ENCODE measurements at regions of chr18 and their contacts with region 1.

Region 1: GRCh38 chr18:76398896-76399612 is 96.0 kb downstream of the ZNF516 start:
- DNase-seq: peak; percentile 67 to 75
- ATAC-seq: peak; percentile 77 to 94
- H3K4me3 ChIP-seq: no peak overlapping the region
- H3K27ac ChIP-seq: no peak overlapping the region
- H3K4me1 ChIP-seq: peaks cover 6 to 13% of the 10 kb centered on the region in 2 donors
- H3K27me3 ChIP-seq: no peaks in the 10 kb centered on the region
- CTCF ChIP-seq: peak; percentile 90 to 99 (median 91)
- POLR2A ChIP-seq: no peak

Region 2: DNA sequence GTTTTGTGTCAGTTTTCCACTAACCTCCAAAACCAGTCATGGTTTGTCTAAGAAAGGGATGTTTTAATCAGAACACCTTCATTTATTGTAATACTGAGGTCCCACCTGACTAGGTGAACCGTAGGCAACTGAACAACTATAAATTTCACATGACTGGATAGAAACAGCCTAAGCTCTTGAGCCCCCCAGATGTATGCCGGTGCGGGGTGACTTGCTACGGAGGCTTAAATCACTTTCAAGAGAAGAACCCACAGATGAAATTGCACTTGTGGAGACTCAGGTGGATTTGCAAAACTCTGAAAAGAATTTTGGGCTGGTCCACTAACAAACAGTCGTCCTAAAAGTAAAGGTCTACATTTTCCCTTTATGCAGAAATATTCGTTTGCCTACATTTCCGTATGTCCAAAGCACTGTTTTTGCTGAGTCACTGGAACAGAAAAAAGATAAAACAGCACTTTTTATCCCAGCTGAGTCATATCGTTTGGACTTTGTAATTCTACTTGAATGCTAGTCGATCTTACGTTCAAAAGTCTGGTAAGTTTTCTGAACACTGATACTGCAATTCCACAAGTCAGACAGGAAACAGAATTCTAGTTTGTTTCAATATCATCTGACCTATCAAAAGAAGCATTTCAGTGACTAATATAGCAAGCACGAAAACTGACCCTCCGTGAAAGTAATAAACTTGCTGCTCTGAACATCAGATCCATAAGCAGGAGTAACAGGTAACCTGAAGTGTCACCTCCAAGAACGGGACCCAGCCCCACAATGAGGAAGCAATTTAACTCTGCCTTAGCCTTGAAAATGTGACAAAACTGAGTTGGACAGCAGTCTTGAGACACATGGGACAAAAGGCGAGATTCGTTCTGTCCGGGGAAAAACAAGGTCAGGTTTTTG is 77.9 kb after region 1 on chr18:
- in situ Hi-C with region 1: no loop called
- intact Hi-C with region 1: loop called (anchors 5 kb)
- DNase-seq: no peak
- ATAC-seq: peak; percentile 21 to 51
- H3K4me3 ChIP-seq: peak overlapping the region; percentile 14 to 36 (median 34)
- H3K27ac ChIP-seq: peak overlapping the region; percentile 67 to 79 (median 72)
- H3K4me1 ChIP-seq: peaks cover 38 to 45% of the 10 kb centered on the region in 2 donors
- H3K27me3 ChIP-seq: no peaks in the 10 kb centered on the region
- CTCF ChIP-seq: no peak
- POLR2A ChIP-seq: no peak

Region 3: DNA sequence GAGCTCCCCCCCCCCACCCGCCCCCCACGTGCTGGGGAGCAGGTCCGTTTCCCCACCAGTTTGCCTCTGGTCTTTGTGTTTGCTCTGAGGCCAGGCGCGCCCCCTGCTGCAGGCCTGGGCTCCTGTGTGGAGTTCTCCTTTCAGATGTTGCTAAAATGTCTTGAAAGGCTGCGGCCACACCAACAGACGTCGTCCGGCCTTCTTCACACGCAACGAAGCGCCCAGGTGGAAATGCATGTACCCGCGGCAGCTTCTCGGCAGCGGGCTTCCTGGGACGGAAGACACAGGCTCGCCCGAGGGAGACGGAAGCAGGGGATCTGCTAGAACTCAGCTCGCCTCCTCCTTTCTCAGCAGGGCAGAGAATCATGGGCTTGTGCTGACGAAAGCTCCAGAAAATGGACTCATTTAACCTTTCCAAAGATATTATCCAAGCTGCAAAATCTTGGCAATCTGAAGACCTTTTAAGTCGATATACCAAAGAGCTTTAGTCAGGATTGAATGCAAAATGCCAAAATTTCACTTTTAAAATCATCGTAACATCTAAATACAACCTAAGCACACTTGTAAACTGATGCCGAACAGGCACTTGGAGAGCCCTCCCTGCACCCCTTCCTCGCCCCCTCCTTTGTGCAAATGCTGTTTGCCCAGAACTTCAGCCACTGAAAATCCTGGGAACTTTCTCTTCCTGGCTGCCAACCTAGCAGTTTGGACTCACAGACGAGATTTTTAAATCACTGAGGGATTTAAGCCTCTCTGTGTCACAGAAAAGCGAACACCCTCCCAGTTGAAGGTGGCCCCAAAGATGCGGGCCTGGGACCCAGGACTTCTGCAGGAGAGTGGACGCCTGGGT is 221.5 kb after region 1 on chr18:
- in situ Hi-C with region 1: loop called in 1 of 4 experiments (anchors 5 kb)
- intact Hi-C with region 1: loop called (anchors 2 kb)
- DNase-seq: peak; percentile 15 to 59
- ATAC-seq: peak; percentile 44 to 80
- H3K4me3 ChIP-seq: peak overlapping the region; percentile 36 to 55 (median 44)
- H3K27ac ChIP-seq: peak overlapping the region in 2 of 4 donors; percentile 47 to 52
- H3K4me1 ChIP-seq: peaks cover 8 to 10% of the 10 kb centered on the region in 2 donors
- H3K27me3 ChIP-seq: no peaks in the 10 kb centered on the region
- CTCF ChIP-seq: peak; percentile 3 to 69 (median 27)
- POLR2A ChIP-seq: no peak

Region 4: GRCh38 chr18:76686737-76687262 is 287.7 kb after region 1 on chr18:
- in situ Hi-C with region 1: loop called in 1 of 4 experiments (anchors 10 kb)
- intact Hi-C with region 1: loop called (anchors 1 kb)
- DNase-seq: peak in 1 of 2 donors; percentile 50
- ATAC-seq: peak; percentile 80 to 92
- H3K4me3 ChIP-seq: no peak overlapping the region
- H3K27ac ChIP-seq: peak overlapping the region in 1 of 4 donors; percentile 31
- H3K4me1 ChIP-seq: peaks cover 0 to 3% of the 10 kb centered on the region in 2 donors
- H3K27me3 ChIP-seq: peaks cover 0 to 12% (median 3%) of the 10 kb centered on the region in 3 donors
- CTCF ChIP-seq: peak; percentile 17 to 56 (median 54)
- POLR2A ChIP-seq: no peak

Region 5: DNA sequence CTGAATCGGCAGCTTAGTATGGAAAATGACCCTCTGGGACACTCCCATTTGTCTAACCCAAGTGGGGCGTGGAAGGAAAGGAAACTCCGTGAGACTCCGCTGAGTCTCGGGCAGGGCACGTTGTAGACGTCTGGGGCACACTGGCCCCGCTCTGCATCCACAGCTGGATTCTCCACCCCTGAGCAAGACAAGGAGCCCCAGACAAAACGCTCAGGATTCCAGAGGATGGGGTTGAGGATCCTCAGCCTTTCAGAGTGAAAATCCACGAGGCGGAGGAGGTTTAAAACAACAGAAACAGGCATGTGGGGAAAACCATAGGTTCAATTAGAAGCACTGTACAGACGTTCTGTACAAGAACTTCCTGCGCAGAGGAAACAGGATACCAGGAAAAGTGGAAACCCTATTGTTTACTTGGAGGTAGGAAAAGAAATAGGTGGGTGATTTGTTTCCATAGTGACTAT is 298.4 kb after region 1 on chr18:
- in situ Hi-C with region 1: loop called in 2 of 4 experiments (anchors 5 kb)
- intact Hi-C with region 1: no loop called
- DNase-seq: no peak
- ATAC-seq: peak in 1 of 2 donors; percentile 23
- H3K4me3 ChIP-seq: peak overlapping the region in 2 of 4 donors; percentile 13 to 15
- H3K27ac ChIP-seq: peak overlapping the region in 3 of 4 donors; percentile 31 to 38 (median 34)
- H3K4me1 ChIP-seq: no peaks in the 10 kb centered on the region
- H3K27me3 ChIP-seq: peaks cover 10 to 22% (median 17%) of the 10 kb centered on the region in 3 donors
- CTCF ChIP-seq: no peak
- POLR2A ChIP-seq: no peak

Region 6: GRCh38 chr18:76709659-76710645 is 310.9 kb after region 1 on chr18:
- in situ Hi-C with region 1: loop called in 1 of 4 experiments (anchors 5 kb)
- intact Hi-C with region 1: loop called (anchors 1 kb)
- DNase-seq: peak; percentile 32 to 36
- ATAC-seq: peak; percentile 76 to 85
- H3K4me3 ChIP-seq: peak overlapping the region in 1 of 4 donors; percentile 31
- H3K27ac ChIP-seq: no peak overlapping the region
- H3K4me1 ChIP-seq: no peaks in the 10 kb centered on the region
- H3K27me3 ChIP-seq: no peaks in the 10 kb centered on the region
- CTCF ChIP-seq: peak; percentile 79 to 93 (median 88)
- POLR2A ChIP-seq: no peak

Measured in gastrocnemius medialis (tissue), 4 donors.